ENCODE measurements at regions of chr1 and their contacts with region 1.

Region 1: DNA sequence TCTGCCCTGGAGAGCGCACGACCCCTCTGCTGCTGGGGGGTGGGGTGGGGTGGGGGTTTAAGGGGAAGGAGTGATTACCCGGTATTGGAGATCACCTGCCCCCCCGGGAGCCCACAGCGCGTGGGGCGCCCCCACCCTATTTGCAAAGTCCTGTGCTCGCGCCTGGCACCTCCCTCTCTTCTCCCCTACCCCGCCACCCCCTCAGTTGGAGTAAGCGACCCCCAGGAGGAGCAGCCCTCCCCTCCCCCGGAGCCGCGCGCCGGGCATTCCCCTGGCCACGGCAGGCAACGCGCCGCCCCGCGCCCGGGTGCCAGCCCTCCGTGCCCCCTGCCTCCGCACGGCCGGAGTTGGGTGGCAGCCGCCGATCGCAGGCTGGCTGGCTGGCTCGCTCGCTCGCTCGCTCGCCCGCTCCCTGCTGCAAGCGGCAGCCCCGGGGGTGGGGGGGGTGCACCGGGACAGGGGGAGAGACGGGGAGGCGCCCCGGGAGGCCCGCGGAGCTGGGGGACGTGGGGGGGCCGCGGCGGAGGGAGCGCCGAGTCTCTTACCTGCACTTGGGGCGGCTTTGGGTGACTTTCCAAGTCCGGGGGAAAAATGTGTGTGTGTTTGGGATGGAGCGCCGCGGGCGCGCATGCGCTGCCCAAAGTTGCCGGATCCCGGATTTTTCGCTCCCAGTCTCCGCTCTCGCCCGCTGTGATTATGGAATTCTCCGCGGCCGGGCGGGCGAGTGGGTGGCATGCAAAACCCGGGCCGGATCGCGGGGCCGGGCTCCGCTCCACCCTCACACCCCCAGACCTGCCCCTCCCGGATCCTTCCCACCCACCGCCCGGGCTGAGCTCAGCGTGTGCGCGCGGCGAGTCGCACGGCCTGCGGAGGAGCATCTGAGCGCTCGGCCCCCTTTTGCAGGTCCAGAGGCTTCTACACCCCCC is at the start of gene CASZ1:
- DNase-seq: peak; percentile 89
- ATAC-seq: peak; percentile 60
- H3K4me3 ChIP-seq: peak within 1 kb of the TSS; percentile 89
- H3K27ac ChIP-seq: no peak within 1 kb of the TSS
- H3K4me1 ChIP-seq: peaks cover 14% of the 10 kb centered on the region
- H3K27me3 ChIP-seq: no peaks in the 10 kb centered on the region
- CTCF ChIP-seq: no peak
- total RNA-seq, gene CASZ1: 12.8 and 21.4 TPM in 2 replicates

Region 2: DNA sequence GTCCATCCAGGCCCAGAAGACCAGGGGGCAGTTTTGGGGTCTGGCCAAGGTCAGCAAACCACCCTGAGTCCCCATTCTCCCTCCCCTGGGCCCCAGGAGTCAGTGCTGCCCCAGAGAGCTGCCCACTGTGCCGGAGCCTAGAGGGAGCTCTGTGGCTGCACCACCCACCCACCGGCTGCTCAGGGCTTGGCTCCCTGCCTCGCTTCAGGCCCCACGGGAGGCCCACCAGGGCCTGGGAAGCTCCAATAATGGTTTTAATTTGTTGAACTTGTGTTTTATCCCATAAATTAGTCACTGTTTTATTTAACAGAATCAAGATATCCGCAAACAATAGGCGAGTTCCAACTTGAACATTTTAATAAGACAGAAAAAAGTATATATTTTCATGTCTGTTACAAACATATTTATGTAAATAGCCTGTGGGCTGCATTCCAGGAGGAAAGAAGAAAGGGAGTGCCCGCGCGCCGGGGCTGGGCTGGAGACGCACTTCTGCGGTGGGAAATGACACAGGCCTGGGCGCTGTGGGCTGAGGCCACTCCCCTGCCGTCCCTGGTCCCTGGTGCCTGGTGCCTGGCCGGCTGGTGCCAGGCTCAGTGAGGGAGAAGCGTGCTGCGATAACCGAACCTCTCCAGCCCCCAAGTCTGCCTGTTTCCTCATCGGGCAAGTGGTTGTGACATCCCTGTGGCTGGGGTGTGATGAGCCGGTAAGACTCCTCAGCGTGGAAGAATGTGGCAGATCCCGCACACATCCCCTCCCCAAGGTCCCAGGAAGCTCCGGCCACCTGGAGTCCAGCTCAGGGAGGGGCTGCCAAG is 161.0 kb before region 1 on chr1:
- CTCF ChIA-PET with region 1: interaction called, 6 read pairs
- POLR2A ChIA-PET with region 1: no interaction called
- intact Hi-C with region 1: loop called (anchors 5 kb)
- DNase-seq: peak; percentile 79
- ATAC-seq: peak; percentile 73
- H3K4me3 ChIP-seq: peak overlapping the region; percentile 46; the same call in 1 of the 2 replicates
- H3K27ac ChIP-seq: peak overlapping the region; percentile 92
- H3K4me1 ChIP-seq: peaks cover 24% of the 10 kb centered on the region
- H3K27me3 ChIP-seq: no peaks in the 10 kb centered on the region
- CTCF ChIP-seq: peak; percentile 51

Region 3: GRCh38 chr1:10694633-10695627 is 101.4 kb before region 1 on chr1:
- CTCF ChIA-PET with region 1: no interaction called
- POLR2A ChIA-PET with region 1: no interaction called
- intact Hi-C with region 1: loop called (anchors 5 kb)
- DNase-seq: peak; percentile 86
- ATAC-seq: peak; percentile 75
- H3K4me3 ChIP-seq: peak overlapping the region; percentile 63
- H3K27ac ChIP-seq: no peak overlapping the region
- H3K4me1 ChIP-seq: peaks cover 29% of the 10 kb centered on the region
- H3K27me3 ChIP-seq: no peaks in the 10 kb centered on the region
- CTCF ChIP-seq: no peak

Region 4: DNA sequence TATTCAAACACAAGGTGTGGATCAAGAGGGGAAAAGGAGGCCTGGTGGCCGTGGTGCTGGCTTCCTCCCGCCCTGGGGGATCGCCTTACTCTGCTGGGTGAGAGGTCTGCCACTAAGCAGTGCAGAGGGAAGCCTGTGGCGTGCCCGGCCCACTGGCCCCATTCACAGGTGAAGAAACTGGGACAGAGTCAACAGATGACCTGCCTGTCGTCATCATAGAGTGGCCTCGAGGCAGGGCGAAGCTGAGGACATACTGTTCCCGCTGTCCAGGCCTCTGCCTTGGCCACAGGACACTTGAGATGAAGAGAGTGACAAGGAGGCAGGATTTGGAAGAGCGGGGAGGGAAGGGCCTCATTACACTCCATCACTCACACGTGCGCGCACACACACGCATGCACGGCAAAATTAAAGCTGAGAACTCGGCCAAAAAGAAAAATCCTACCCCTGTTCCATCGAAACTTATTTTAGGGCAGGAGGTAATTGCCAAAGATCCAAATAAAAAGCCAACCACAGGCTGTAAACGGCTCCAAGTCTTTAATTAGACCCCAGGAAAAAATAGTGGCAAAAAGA is 50.3 kb before region 1 on chr1:
- CTCF ChIA-PET with region 1: no interaction called
- POLR2A ChIA-PET with region 1: no interaction called
- intact Hi-C with region 1: no loop called
- DNase-seq: no peak
- ATAC-seq: no peak
- H3K4me3 ChIP-seq: no peak overlapping the region
- H3K27ac ChIP-seq: no peak overlapping the region
- H3K4me1 ChIP-seq: no peaks in the 10 kb centered on the region
- H3K27me3 ChIP-seq: no peaks in the 10 kb centered on the region
- CTCF ChIP-seq: no peak

Region 5: GRCh38 chr1:10779201-10779600 is 17.1 kb before region 1 on chr1:
- CTCF ChIA-PET with region 1: no interaction called
- POLR2A ChIA-PET with region 1: interaction called, 13 read pairs
- intact Hi-C with region 1: no loop called
- DNase-seq: peak; percentile 92
- ATAC-seq: peak; percentile 98
- H3K4me3 ChIP-seq: peak overlapping the region; percentile 42; the same call in 1 of the 2 replicates
- H3K27ac ChIP-seq: peak overlapping the region; percentile 80
- H3K4me1 ChIP-seq: peaks cover 26% of the 10 kb centered on the region
- H3K27me3 ChIP-seq: no peaks in the 10 kb centered on the region
- CTCF ChIP-seq: no peak

Region 6: GRCh38 chr1:10867138-10867721 is 70.9 kb after region 1 on chr1:
- CTCF ChIA-PET with region 1: no interaction called
- POLR2A ChIA-PET with region 1: no interaction called
- intact Hi-C with region 1: loop called (anchors 2 kb)
- DNase-seq: peak; percentile 69
- ATAC-seq: peak; percentile 88
- H3K4me3 ChIP-seq: peak overlapping the region; percentile 67
- H3K27ac ChIP-seq: no peak overlapping the region
- H3K4me1 ChIP-seq: peaks cover 4% of the 10 kb centered on the region; the same call in 1 of the 2 replicates
- H3K27me3 ChIP-seq: no peaks in the 10 kb centered on the region
- CTCF ChIP-seq: peak; percentile 52